GM12878 (cell line): ENCODE measurements at regions of chr1 and their contacts with region 1.

Region 1: DNA sequence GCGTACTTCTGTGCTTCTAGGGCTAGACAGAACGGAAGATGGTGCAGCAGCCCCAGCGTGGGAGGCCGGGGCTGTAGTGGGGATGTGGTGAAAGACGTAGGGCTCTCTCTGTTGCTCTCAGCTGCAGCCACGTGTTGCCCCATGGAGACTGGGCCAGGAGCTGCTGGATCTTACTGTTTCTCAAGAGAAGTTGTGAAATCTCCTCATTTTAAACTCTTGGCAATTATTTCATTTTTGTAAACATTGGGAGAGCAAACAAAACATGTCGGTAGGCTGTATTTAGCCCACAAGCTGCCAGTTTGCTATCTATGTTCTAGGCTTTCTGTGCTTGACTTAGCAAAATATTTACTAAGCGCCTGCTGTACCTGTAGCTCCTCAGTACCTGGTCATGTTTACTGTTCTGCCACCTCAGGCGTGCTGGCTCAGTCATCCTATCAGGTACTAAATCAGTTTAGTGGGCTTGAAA is 15.9 kb upstream of the ELOA start:
- DNase-seq: no peak
- ATAC-seq: peak; percentile 64
- H3K4me3 ChIP-seq: no peak overlapping the region; the same call in 1 of the 2 replicates
- H3K27ac ChIP-seq: peak overlapping the region; percentile 91
- H3K4me1 ChIP-seq: peaks cover 55% of the 10 kb centered on the region
- H3K27me3 ChIP-seq: no peaks in the 10 kb centered on the region
- CTCF ChIP-seq: peak in 1 of 3 experiments; percentile 21; a peak in 1 of 6 replicates
- EP300 ChIP-seq: no peak
- POLR2A ChIP-seq: no peak
- RAD21 ChIP-seq: 0 out of 2 replicates have a peak, but pooled peaks have one; percentile 24

Region 2: DNA sequence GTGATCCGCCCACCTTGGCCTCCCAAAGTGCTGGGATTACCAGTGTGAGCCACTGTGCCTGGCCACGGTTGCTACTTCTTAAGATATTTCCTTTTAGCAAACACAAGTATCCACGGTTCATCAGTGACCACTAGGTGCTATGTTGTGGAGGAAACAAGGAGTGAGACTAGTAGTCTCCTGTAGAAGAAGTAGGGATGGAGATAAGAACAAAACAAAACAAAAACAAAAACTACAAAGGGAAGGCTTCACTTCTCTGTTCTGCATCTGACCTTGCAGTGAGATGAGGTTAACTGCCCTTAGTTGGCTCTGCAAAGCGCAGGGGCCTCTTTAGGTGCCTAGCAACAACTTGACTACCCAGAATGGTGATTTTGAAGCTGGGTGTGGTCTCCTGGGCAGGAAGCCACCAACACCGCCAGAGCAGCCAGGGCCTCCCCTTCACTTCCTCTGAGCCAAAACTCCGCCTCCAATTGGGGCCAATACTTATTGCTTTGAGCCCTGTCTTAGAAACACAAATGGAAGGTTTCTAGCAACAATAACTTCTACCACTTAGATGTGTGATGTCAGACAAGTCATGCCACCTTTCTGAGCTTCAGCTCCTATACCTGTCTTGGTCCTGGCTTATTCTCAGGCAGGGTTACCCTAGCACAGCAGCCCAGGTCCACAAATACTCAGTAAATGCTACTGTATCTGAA is 1687.7 kb before region 1 on chr1:
- CTCF ChIA-PET with region 1: no interaction called
- POLR2A ChIA-PET with region 1: no interaction called
- RAD21 ChIA-PET with region 1: no interaction called
- SMC1A ChIA-PET with region 1: no interaction called
- in situ Hi-C with region 1: no loop called
- intact Hi-C with region 1: loop called (anchors 10 kb)
- DNase-seq: peak; percentile 97
- ATAC-seq: peak; percentile 100
- H3K4me3 ChIP-seq: peak overlapping the region; percentile 33; the same call in 1 of the 2 replicates
- H3K27ac ChIP-seq: peak overlapping the region; percentile 94
- H3K4me1 ChIP-seq: peaks cover 25% of the 10 kb centered on the region
- H3K27me3 ChIP-seq: no peaks in the 10 kb centered on the region
- CTCF ChIP-seq: 0 out of 6 replicates have a peak, but pooled peaks of 2 of the 3 experiments have one; percentile 0 to 24
- EP300 ChIP-seq: no peak
- POLR2A ChIP-seq: peak; percentile 60
- RAD21 ChIP-seq: 0 out of 2 replicates have a peak, but pooled peaks have one; percentile 8

Region 3: DNA sequence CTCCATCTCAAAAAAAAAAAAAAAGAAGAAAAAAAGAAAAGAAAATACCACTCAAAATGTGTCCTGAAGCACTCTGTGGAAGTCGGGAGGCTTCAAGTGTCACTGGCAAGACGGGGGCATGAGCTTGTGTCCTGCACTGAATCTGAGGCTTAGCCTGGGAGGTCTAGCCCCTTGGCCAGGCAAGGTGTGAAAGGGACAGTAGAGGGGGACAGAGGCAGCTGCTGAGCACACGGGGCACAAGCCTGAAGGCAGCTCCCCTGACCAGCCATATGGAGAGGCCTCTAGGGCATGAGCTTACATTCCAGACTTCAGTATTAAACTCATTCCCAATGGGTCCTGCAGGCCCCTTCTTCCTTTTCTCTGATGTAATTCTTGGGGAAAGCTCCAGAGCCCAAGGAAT is 219.9 kb before region 1 on chr1:
- CTCF ChIA-PET with region 1: no interaction called
- POLR2A ChIA-PET with region 1: no interaction called
- RAD21 ChIA-PET with region 1: no interaction called
- SMC1A ChIA-PET with region 1: no interaction called
- in situ Hi-C with region 1: no loop called
- intact Hi-C with region 1: no loop called
- DNase-seq: no peak
- ATAC-seq: no peak
- H3K4me3 ChIP-seq: no peak overlapping the region
- H3K27ac ChIP-seq: no peak overlapping the region
- H3K4me1 ChIP-seq: no peaks in the 10 kb centered on the region
- H3K27me3 ChIP-seq: no peaks in the 10 kb centered on the region
- CTCF ChIP-seq: no peak
- EP300 ChIP-seq: no peak
- POLR2A ChIP-seq: no peak
- RAD21 ChIP-seq: no peak

Region 4: GRCh38 chr1:23664837-23665795 is 62.3 kb before region 1 on chr1:
- CTCF ChIA-PET with region 1: no interaction called
- POLR2A ChIA-PET with region 1: no interaction called
- RAD21 ChIA-PET with region 1: no interaction called
- SMC1A ChIA-PET with region 1: no interaction called
- in situ Hi-C with region 1: no loop called
- intact Hi-C with region 1: no loop called
- DNase-seq: peak; percentile 15
- ATAC-seq: peak; percentile 89
- H3K4me3 ChIP-seq: no peak overlapping the region
- H3K27ac ChIP-seq: no peak overlapping the region
- H3K4me1 ChIP-seq: peaks cover 6% of the 10 kb centered on the region; the same call in 1 of the 2 replicates
- H3K27me3 ChIP-seq: no peaks in the 10 kb centered on the region
- CTCF ChIP-seq: peak; percentile 6 to 45 (median 23); a peak in 3 of 6 replicates
- EP300 ChIP-seq: no peak
- POLR2A ChIP-seq: no peak
- RAD21 ChIP-seq: peak; percentile 41

Region 5: GRCh38 chr1:23691499-23692307 is 35.7 kb before region 1 on chr1 and contains the start of gene RPL11:
- CTCF ChIA-PET with region 1: interaction called, 9 read pairs
- POLR2A ChIA-PET with region 1: interaction called, 5 read pairs
- RAD21 ChIA-PET with region 1: interaction called, 11 read pairs
- SMC1A ChIA-PET with region 1: interaction called, 46 read pairs
- in situ Hi-C with region 1: no loop called
- intact Hi-C with region 1: no loop called
- DNase-seq: peak; percentile 84
- ATAC-seq: peak; percentile 94
- H3K4me3 ChIP-seq: peak within 1 kb of the TSS; percentile 87
- H3K27ac ChIP-seq: peak within 1 kb of the TSS; percentile 95
- H3K4me1 ChIP-seq: peaks cover 8% of the 10 kb centered on the region
- H3K27me3 ChIP-seq: no peaks in the 10 kb centered on the region
- CTCF ChIP-seq: peak; percentile 81 to 85 (median 84)
- EP300 ChIP-seq: 0 out of 4 replicates have a peak, but pooled peaks of 1 of the 2 experiments have one; percentile 17
- POLR2A ChIP-seq: peak; percentile 98
- RAD21 ChIP-seq: peak; percentile 56
- polyA plus RNA-seq, gene RPL11: 2,510 to 2,532 TPM

Region 6: DNA sequence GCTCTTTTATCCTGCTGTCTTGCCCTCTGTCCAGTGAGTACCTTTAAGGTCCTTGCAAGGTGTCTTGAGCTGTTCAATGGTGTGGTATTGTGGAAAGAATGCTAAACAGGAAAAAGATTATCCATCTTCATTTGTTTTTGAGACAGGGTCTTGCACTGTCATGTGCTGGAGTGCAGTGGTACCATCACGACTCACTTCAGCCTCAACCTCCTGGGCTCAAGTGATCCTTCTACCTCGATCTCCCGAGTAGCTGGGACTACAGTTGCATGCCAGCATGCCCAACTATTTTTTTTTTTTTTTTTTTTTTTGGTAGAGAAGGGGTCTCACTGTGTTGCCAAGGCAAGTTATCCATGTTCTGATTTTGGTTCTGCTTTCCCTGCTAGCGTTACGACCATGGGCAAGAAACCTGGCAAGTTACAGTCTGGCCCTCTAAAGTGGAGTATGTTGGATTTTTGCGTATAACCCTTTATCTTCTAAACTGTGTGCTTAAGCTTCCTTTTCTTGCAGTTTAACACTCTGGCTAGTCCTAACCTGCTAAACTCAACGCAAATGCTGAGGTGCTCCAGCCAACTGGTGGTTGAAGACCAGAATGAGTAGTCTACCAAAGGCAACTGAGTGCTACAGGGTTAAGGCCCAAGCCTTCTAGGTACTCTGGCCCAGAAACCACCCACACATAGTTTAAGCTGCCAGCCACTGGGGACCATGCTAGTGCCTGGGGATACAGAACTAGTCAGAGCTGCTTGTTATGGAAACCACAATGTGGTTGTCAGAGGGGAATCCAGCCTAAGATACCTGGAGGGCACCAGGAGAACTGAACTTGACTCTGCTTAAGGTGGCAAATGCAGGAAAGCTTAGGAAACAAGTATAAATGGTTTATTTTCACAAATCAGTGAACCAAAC is 27.9 kb before region 1 on chr1:
- CTCF ChIA-PET with region 1: interaction called, 7 read pairs
- POLR2A ChIA-PET with region 1: interaction called, 9 read pairs
- RAD21 ChIA-PET with region 1: interaction called, 8 read pairs
- SMC1A ChIA-PET with region 1: interaction called, 46 read pairs
- in situ Hi-C with region 1: no loop called
- intact Hi-C with region 1: no loop called
- DNase-seq: no peak
- ATAC-seq: peak; percentile 82
- H3K4me3 ChIP-seq: no peak overlapping the region
- H3K27ac ChIP-seq: no peak overlapping the region
- H3K4me1 ChIP-seq: peaks cover 7% of the 10 kb centered on the region
- H3K27me3 ChIP-seq: no peaks in the 10 kb centered on the region
- CTCF ChIP-seq: no peak
- EP300 ChIP-seq: no peak
- POLR2A ChIP-seq: no peak
- RAD21 ChIP-seq: no peak

Region 7: DNA sequence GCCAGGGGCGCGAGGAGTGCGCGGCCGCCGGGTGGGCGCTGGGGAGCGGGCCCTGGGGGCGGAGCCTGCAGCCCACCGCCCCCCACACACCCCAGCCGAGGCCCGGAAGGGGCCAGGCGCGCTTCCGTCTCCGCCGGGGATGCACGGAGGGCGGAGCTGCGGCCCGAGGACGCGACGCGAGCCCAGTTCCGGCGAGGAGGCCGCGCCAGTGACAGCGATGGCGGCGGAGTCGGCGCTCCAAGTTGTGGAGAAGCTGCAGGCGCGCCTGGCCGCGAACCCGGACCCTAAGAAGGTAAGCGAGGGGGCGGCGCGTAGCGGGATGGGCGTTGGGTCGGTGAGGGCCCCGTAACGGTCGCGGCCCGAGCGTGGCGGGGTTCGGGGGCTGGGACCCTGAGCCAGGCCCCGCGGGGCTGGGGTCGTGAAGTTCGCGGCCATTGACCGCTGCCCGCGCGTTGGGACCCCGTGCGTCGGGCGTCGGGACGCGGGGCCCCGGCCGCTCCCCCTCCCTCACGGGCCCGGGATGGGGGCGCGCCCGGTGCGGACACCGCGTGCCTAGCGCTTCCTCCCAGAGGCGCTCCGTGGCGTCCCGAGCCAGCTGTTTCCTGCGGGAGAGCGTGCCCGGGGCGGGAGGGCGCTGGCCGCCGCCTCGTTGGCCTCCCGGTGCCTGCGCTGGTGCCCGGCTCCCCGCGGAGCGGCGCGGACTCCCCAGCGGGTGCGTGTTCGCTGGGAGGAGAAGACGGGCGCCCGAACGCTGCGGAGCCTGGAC is 16.1 kb after region 1 on chr1 and contains the start of gene ELOA:
- CTCF ChIA-PET with region 1: interaction called, 34 read pairs
- POLR2A ChIA-PET with region 1: interaction called, 29 read pairs
- RAD21 ChIA-PET with region 1: interaction called, 51 read pairs
- SMC1A ChIA-PET with region 1: interaction called, 13 read pairs
- in situ Hi-C with region 1: no loop called
- intact Hi-C with region 1: loop called (anchors 2 kb)
- DNase-seq: no peak
- ATAC-seq: peak; percentile 92
- H3K4me3 ChIP-seq: peak within 1 kb of the TSS; percentile 84
- H3K27ac ChIP-seq: peak within 1 kb of the TSS; percentile 73
- H3K4me1 ChIP-seq: peaks cover 12% of the 10 kb centered on the region
- H3K27me3 ChIP-seq: no peaks in the 10 kb centered on the region
- CTCF ChIP-seq: no peak
- EP300 ChIP-seq: no peak
- POLR2A ChIP-seq: peak; percentile 99
- RAD21 ChIP-seq: no peak
- polyA plus RNA-seq, gene ELOA: 20.1 to 24.8 TPM

Region 8: GRCh38 chr1:23751050-23751814 is 23.8 kb after region 1 on chr1:
- CTCF ChIA-PET with region 1: interaction called, 34 read pairs
- POLR2A ChIA-PET with region 1: interaction called, 29 read pairs
- RAD21 ChIA-PET with region 1: interaction called, 51 read pairs
- SMC1A ChIA-PET with region 1: interaction called, 6 read pairs
- in situ Hi-C with region 1: no loop called
- intact Hi-C with region 1: no loop called
- DNase-seq: no peak
- ATAC-seq: peak; percentile 97
- H3K4me3 ChIP-seq: no peak overlapping the region
- H3K27ac ChIP-seq: no peak overlapping the region
- H3K4me1 ChIP-seq: no peaks in the 10 kb centered on the region
- H3K27me3 ChIP-seq: no peaks in the 10 kb centered on the region
- CTCF ChIP-seq: peak; percentile 79 to 86 (median 84)
- EP300 ChIP-seq: no peak
- POLR2A ChIP-seq: no peak
- RAD21 ChIP-seq: peak; percentile 93